ENCODE measurements at regions of chr1 and their contacts with region 1.

Region 1: GRCh38 chr1:244989813-244990212 is 125.5 kb upstream of the HNRNPU start:
- H3K4me3 Mint-ChIP-seq: no peak overlapping the region
- H3K27ac Mint-ChIP-seq: no peak overlapping the region
- H3K4me1 Mint-ChIP-seq: peaks cover 10% of the 10 kb centered on the region
- H3K27me3 Mint-ChIP-seq: no peaks in the 10 kb centered on the region

Region 2: GRCh38 chr1:245019910-245020486 is 30.2 kb after region 1 on chr1:
- intact Hi-C with region 1: loop called (anchors 5 kb)
- H3K4me3 Mint-ChIP-seq: no peak overlapping the region
- H3K27ac Mint-ChIP-seq: no peak overlapping the region
- H3K4me1 Mint-ChIP-seq: peaks cover 5% of the 10 kb centered on the region
- H3K27me3 Mint-ChIP-seq: no peaks in the 10 kb centered on the region

Measured in dendritic cell treated with granulocyte-macrophage colony-stimulating factor and Interleukin-4, amounts not matched to agents 40 ng/mL and 50 ng/mL, for 4 days (primary cell).